Spleen (tissue), 13 donors: ENCODE measurements at regions of chr7 and their contacts with region 1.

Region 1: GRCh38 chr7:150787321-150788281 is 12.6 kb downstream of the TMEM176B start:
- DNase-seq: no peak
- H3K4me3 ChIP-seq: no peak overlapping the region
- H3K27ac ChIP-seq: peak overlapping the region in 7 of 8 donors; percentile 63 to 80 (median 79)
- H3K4me1 ChIP-seq: peaks cover 19 to 60% (median 40%) of the 10 kb centered on the region in 6 donors
- H3K27me3 ChIP-seq: peaks cover 0 to 9% (median 0%) of the 10 kb centered on the region in 7 donors
- CTCF ChIP-seq: no peak
- POLR2A ChIP-seq: no peak

Region 2: GRCh38 chr7:150514748-150515222 is 272.8 kb before region 1 on chr7 and contains the start of gene GIMAP7:
- intact Hi-C with region 1: no loop called
- DNase-seq: no peak
- H3K4me3 ChIP-seq: peak within 1 kb of the TSS; percentile 29 to 80 (median 58)
- H3K27ac ChIP-seq: peak within 1 kb of the TSS; percentile 75 to 93 (median 86)
- H3K4me1 ChIP-seq: peaks cover 4 to 52% (median 14%) of the 10 kb centered on the region in 6 donors
- H3K27me3 ChIP-seq: no peaks in the 10 kb centered on the region
- CTCF ChIP-seq: no peak
- POLR2A ChIP-seq: peak in 2 of 3 donors; percentile 46 to 54
- total RNA-seq, gene GIMAP7: 71.2 to 137 (median 102) TPM

Region 3: GRCh38 chr7:150852371-150852920 is 64.8 kb after region 1 on chr7 and contains the start of gene AOC1:
- intact Hi-C with region 1: no loop called
- DNase-seq: no peak
- H3K4me3 ChIP-seq: no peak within 1 kb of the TSS
- H3K27ac ChIP-seq: peak within 1 kb of the TSS in 1 of 8 donors; percentile 4
- H3K4me1 ChIP-seq: no peaks in the 10 kb centered on the region
- H3K27me3 ChIP-seq: peaks cover 0 to 35% (median 4%) of the 10 kb centered on the region in 7 donors
- CTCF ChIP-seq: no peak
- POLR2A ChIP-seq: no peak
- total RNA-seq, gene AOC1: 0.36 to 2.5 (median 0.79) TPM in 5 of 7 donors, not detected in the others

Region 4: GRCh38 chr7:150876817-150877526 is 89.4 kb after region 1 on chr7:
- intact Hi-C with region 1: loop called (anchors 5 kb)
- DNase-seq: peak; percentile 74
- H3K4me3 ChIP-seq: peak overlapping the region in 1 of 8 donors; percentile 29
- H3K27ac ChIP-seq: peak overlapping the region in 1 of 8 donors; percentile 12
- H3K4me1 ChIP-seq: peaks cover 4 to 21% (median 8%) of the 10 kb centered on the region in 6 donors
- H3K27me3 ChIP-seq: no peaks in the 10 kb centered on the region
- CTCF ChIP-seq: peak in 9 of 11 experiments; percentile 9 to 60 (median 44)
- POLR2A ChIP-seq: no peak